Transverse colon (tissue), 4 donors: ENCODE measurements at regions of chr1 and their contacts with region 1.

Region 1: DNA sequence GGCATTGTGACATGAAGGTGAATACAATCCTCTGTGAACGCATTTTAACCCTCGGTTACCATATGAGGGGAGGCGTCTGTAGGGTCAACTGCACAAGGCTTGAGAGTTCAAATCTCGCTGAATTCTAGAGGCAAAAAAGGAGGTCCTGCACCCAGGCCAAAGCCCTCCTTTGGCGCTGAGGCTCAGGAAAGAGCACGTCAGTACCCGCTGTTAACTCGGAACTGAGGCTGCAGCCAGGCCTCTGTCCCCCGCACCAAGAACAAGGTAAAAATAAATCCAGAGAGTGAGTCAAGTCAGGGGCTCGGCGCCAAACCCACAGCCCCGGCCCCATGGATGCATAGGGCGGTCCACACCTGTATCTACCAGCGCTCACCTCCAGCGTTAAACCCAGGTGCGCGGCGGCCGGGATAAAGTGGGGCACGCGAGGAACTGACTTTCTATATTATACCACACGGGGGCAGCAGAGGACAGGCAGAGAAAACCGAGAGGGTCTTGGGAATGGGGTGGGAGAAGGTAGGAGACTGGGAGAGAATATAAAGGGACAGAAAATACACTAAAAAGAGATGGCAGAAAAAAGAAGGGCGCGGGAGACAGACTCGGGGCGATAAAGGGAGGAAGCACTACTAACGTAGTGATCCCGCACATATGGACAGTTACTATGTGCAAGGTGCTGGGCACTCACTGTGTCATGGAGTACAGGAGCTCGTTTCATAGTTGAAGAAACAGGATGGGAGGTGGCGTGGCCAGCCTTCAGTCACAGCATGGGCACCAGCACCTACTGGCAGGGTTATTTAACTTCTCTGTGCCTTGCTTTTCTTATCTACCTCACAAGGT is 54.8 kb downstream of the DMRTA2 start:
- DNase-seq: peak; percentile 35
- H3K4me3 ChIP-seq: no peak overlapping the region
- H3K27ac ChIP-seq: no peak overlapping the region
- H3K4me1 ChIP-seq: peaks cover 0 to 7% (median 2%) of the 10 kb centered on the region in 4 donors
- H3K27me3 ChIP-seq: peaks cover 51% of the 10 kb centered on the region
- CTCF ChIP-seq: peak; percentile 58 to 83 (median 72)
- EP300 ChIP-seq: no peak
- POLR2A ChIP-seq: no peak

Region 2: DNA sequence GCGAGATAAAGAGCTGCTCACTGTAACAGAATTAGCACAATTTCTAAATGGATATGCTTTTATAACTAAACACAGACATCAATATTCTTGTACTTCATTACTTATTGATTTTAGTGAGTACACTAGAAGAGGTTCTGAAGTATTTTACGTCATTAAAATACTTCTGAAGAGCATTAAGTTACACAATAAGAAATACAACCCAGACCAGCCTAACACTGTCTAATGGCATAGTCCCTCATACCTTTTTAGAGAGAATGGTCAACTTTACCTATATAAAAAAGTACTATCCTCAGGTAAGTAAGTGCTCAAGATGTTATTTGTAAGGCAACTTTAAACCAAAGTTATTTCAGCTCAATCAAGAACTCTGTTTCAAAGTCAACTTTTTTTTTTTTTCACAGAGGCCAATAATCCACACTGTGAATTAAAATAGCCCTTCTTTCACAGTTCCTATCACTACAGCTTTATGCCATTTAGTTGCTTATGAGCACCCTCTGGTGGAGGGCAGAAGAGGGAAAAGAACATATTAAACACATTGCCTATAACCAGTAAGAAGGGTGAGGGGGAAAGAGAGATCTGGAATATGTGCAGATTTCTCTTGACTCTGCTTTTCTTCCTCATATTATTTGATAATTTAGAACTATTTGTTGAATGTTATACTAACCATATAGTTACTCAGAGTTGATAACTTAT is 236.9 kb after region 1 on chr1:
- in situ Hi-C with region 1: loop called in 1 of 4 experiments (anchors 10 kb)
- intact Hi-C with region 1: no loop called
- DNase-seq: peak; percentile 10
- H3K4me3 ChIP-seq: no peak overlapping the region
- H3K27ac ChIP-seq: no peak overlapping the region
- H3K4me1 ChIP-seq: no peaks in the 10 kb centered on the region
- H3K27me3 ChIP-seq: no peaks in the 10 kb centered on the region
- CTCF ChIP-seq: peak; percentile 7 to 52 (median 46)
- EP300 ChIP-seq: no peak
- POLR2A ChIP-seq: no peak

Region 3: DNA sequence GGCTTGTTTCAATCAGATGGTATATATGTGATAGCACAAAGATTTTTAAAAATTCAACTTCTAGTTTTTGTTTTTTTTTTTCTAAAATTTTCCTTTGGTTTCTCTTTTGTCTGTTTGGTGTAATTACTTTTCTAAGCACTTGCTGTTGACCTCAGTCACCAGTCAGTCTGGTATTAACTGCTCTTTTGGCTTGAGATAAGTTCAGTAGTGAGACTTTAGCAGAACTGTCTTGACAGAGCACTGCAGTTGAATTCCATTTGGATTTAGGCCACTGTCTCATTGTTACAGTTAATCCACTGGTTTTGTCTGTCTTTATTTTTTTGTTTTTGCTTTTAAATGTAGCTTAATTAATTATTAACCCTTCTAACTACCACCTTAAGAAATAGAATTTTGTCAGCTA is 1284.7 kb after region 1 on chr1:
- in situ Hi-C with region 1: no loop called
- intact Hi-C with region 1: no loop called
- DNase-seq: no peak
- H3K4me3 ChIP-seq: no peak overlapping the region
- H3K27ac ChIP-seq: no peak overlapping the region
- H3K4me1 ChIP-seq: peaks cover 11 to 23% (median 12%) of the 10 kb centered on the region in 4 donors
- H3K27me3 ChIP-seq: no peaks in the 10 kb centered on the region
- CTCF ChIP-seq: no peak
- EP300 ChIP-seq: no peak
- POLR2A ChIP-seq: no peak